Activated CD4-positive, alpha-beta T cell treated with anti-CD3 and anti-CD28 coated beads for 36 hours (primary cell): ENCODE measurements at regions of chr19 and their contacts with region 1.

Region 1: GRCh38 chr19:4328243-4328990 is 10.2 kb downstream of the STAP2 start:
- DNase-seq: peak; percentile 100
- ATAC-seq: peak; percentile 85
- H3K4me3 Mint-ChIP-seq: peak overlapping the region; percentile 93
- H3K27ac Mint-ChIP-seq: peak overlapping the region; percentile 94
- H3K4me1 Mint-ChIP-seq: peaks cover 27% of the 10 kb centered on the region
- H3K27me3 Mint-ChIP-seq: no peaks in the 10 kb centered on the region

Region 2: DNA sequence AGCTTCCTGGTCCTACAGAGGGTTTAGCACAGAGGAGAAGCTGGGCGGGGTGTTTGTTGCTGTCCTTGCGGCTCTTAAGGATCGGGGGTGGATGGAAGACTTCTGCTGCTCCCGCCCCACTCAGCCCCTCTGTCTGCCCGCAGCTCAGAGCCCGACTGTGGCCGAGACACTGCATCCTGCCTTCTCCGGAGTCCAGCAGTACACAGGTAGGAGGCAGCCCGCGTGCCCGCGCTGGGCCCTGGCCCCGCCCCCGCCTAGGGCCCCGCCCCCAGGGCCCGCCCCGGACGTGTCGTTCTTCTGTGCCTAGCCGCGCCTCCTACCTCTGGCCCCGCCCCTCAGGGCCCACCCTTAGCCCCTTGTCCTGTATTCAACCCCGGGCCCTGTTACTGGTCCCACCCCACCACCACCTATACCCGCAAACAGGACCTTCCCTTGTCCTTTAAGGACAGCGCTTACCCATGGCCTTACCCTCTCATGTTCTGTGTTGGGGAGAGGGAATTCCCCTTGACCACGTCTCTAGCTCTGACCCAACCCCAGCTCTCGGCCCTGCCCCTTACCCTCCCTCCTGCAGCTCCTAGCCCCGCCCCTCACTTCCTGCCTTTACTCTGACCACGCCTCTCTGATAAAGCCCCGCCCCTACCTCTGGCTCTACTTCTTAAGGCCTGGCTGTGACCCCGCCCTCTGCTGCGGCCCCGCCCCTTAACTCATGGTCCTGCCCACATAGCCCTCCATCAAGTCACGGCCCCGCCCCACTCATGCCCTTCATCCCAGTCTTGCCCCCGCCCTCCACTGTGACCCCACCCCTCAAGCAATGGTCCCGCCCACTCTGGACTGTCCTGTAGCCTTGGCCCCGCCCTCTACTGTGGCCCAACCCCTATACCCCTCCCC is 1043.4 kb before region 1 on chr19:
- CTCF ChIA-PET with region 1: no interaction called
- POLR2A ChIA-PET with region 1: no interaction called
- intact Hi-C with region 1: loop called in 1 of 2 experiments (anchors 1 kb)
- DNase-seq: peak; percentile 94
- ATAC-seq: peak; percentile 91
- H3K4me3 Mint-ChIP-seq: peak overlapping the region; percentile 51
- H3K27ac Mint-ChIP-seq: no peak overlapping the region
- H3K4me1 Mint-ChIP-seq: peaks cover 12% of the 10 kb centered on the region
- H3K27me3 Mint-ChIP-seq: peaks cover 19% of the 10 kb centered on the region

Region 3: GRCh38 chr19:3970808-3971598 is 357.4 kb before region 1 on chr19 and contains the start of gene DAPK3:
- CTCF ChIA-PET with region 1: no interaction called
- POLR2A ChIA-PET with region 1: no interaction called
- intact Hi-C with region 1: loop called in 1 of 2 experiments (anchors 1 kb)
- DNase-seq: peak; percentile 97
- ATAC-seq: peak; percentile 95
- H3K4me3 Mint-ChIP-seq: peak within 1 kb of the TSS; percentile 83
- H3K27ac Mint-ChIP-seq: peak within 1 kb of the TSS; percentile 58
- H3K4me1 Mint-ChIP-seq: peaks cover 22% of the 10 kb centered on the region
- H3K27me3 Mint-ChIP-seq: no peaks in the 10 kb centered on the region
- total RNA-seq, gene DAPK3: 26.7 to 27.6 TPM

Region 4: DNA sequence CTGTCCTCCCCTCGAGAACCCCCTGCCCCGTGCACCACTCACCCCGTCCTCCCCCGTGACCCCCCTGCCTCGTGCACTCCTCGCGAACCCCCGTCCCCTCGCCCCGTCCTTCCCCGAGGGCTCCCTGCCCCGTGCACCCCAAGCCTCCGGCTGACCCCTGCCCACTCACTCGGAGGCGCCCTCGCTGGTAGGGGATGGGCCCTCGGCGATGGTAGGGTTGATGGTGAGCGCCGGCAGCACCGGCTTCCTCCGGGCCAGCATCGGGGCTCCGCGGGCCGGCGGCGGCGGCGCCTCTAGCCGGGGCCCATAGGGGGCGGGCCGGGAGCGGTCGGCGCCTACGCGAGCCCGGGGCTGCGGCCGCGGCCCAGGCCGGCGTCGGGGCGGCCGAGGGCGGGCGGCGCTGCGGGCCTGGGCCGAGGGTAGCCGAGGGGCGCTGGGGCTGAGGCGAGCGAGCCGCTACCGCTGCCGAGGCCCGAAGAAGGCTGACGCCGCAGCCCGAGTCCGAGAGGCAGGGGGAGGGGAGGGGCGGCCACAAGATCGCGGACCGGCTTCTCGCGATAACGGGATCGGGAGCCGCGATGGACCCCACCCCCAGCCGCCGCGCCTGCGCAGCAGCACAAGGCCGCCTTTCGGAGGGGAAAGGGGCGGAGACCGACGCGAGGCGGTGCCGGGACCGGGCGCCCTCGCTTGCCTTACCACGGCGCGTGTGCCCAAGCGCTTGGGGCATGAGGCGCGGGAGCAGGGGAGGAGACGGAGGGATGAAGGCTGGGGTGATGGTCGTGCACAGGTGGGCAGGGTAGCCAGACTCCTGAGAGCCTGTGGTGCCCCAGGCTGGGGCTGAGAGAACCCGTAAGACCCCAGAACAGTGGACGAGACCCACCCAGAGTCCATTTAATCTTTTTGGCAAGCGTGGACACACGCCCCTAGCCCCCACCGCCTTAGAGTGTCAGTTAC is 204.5 kb before region 1 on chr19 and contains the start of gene MAP2K2:
- CTCF ChIA-PET with region 1: no interaction called
- POLR2A ChIA-PET with region 1: no interaction called
- intact Hi-C with region 1: loop called in 1 of 2 experiments (anchors 1 kb)
- DNase-seq: peak; percentile 98
- ATAC-seq: peak; percentile 96
- H3K4me3 Mint-ChIP-seq: peak within 1 kb of the TSS; percentile 97
- H3K27ac Mint-ChIP-seq: peak within 1 kb of the TSS; percentile 92
- H3K4me1 Mint-ChIP-seq: peaks cover 18% of the 10 kb centered on the region
- H3K27me3 Mint-ChIP-seq: no peaks in the 10 kb centered on the region
- total RNA-seq, gene MAP2K2: 108 to 133 TPM

Region 5: DNA sequence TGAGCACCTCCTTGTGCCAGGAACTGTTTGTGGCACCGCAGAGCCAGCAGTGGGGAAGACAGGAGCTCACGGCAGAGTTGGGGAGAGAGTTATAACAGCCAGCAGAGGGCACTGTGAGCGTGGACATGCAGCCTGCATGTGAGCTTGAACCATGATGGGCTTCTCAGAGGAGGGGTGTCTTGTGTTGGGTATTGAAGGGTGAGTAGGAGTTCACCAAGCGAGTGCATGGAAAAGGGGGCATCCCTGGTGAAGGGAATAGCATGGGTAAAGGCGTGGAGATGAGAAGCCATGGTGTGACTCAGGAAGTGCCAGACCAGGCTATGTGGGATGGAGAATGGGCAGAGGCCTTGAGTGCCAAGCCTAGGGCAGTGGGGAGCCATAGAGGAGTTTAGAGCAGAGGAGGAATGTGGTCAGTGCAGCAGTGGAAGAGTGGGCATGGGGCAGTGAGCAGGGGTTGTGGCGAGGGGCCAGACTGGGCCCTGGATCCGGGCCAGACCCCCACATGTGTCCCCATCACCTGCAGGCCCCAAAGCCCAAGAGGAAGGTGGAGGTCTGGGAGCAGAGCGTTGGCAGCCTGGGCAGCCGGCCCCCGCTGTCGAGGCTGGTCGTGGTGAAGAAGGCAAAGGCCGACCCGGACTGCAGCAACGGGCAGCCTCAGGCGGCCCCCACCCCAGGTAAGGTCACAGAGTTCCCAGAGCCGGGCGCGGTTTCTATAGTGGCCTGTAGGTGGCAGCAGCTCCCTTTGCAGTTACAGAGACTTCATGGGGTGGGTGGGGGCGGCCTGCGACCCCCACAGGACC is 61.1 kb before region 1 on chr19:
- CTCF ChIA-PET with region 1: interaction called, 6 read pairs
- POLR2A ChIA-PET with region 1: interaction called, 3 read pairs
- intact Hi-C with region 1: loop called in 1 of 2 experiments (anchors 1 kb)
- DNase-seq: peak; percentile 83
- ATAC-seq: peak; percentile 81
- H3K4me3 Mint-ChIP-seq: no peak overlapping the region
- H3K27ac Mint-ChIP-seq: peak overlapping the region; percentile 9
- H3K4me1 Mint-ChIP-seq: peaks cover 14% of the 10 kb centered on the region
- H3K27me3 Mint-ChIP-seq: no peaks in the 10 kb centered on the region

Region 6: GRCh38 chr19:4369888-4370260 is 41.5 kb after region 1 on chr19:
- CTCF ChIA-PET with region 1: no interaction called
- POLR2A ChIA-PET with region 1: no interaction called
- intact Hi-C with region 1: loop called in 1 of 2 experiments (anchors 1 kb)
- DNase-seq: peak; percentile 91
- ATAC-seq: peak; percentile 79
- H3K4me3 Mint-ChIP-seq: peak overlapping the region; percentile 63
- H3K27ac Mint-ChIP-seq: peak overlapping the region; percentile 93
- H3K4me1 Mint-ChIP-seq: peaks cover 40% of the 10 kb centered on the region
- H3K27me3 Mint-ChIP-seq: no peaks in the 10 kb centered on the region

Region 7: DNA sequence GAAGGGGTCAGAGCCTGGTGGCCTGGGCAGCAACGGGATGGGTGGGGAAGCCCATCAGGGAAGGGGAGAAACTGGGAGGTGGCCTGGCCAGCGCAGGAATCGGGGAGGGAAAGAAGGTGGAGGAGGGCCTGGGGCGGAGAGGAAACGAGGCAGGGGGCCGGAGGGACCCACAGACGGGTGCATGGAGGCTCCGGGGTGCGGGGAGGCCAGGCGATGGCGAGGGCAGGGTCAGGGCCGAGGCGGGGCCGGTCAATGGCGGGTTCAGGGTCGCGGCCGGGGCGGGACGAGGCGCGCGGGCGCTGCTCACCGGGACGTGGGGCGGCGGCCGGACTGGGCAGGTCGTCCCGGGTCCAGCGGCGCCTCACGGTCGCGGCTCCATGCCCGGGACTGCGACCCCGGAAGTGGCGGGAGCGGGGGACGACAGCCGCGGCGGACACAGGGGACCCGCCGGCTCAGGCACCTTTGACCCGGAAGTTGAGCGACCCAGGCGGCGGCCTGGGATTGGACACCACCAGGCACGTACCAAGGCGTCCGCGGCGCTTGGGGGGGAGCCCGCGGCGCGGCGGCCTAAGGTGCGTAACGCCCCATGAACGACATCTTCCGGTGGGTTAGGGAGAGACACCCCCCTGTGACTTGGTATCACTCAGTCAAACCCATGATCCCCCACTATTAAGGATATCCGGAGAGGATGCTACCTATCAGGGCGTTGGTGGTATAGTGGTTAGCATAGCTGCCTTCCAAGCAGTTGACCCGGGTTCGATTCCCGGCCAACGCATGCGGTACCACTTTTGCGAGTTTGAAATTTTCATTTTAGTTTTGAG is 395.2 kb after region 1 on chr19 and contains the start of gene DPP9:
- CTCF ChIA-PET with region 1: no interaction called
- POLR2A ChIA-PET with region 1: no interaction called
- intact Hi-C with region 1: loop called in 1 of 2 experiments (anchors 1 kb)
- DNase-seq: peak; percentile 98
- ATAC-seq: peak; percentile 95
- H3K4me3 Mint-ChIP-seq: peak within 1 kb of the TSS; percentile 92
- H3K27ac Mint-ChIP-seq: peak within 1 kb of the TSS; percentile 93
- H3K4me1 Mint-ChIP-seq: peaks cover 26% of the 10 kb centered on the region
- H3K27me3 Mint-ChIP-seq: no peaks in the 10 kb centered on the region
- total RNA-seq, gene DPP9: 49.2 to 51.3 TPM